Activated B cell treated with CpG ODN at 0.5 μM for 24 hours (primary cell): ENCODE measurements at regions of chr6 and their contacts with region 1.

Region 1: GRCh38 chr6:7725849-7726415 is at the start of gene BMP6:
- DNase-seq: peak; percentile 57
- ATAC-seq: peak; percentile 85
- H3K4me3 Mint-ChIP-seq: peak within 1 kb of the TSS; percentile 83
- H3K27ac Mint-ChIP-seq: no peak within 1 kb of the TSS
- H3K4me1 Mint-ChIP-seq: peaks cover 30% of the 10 kb centered on the region
- H3K27me3 Mint-ChIP-seq: peaks cover 53% of the 10 kb centered on the region
- CTCF ChIP-seq: no peak
- total RNA-seq, gene BMP6: 0.75 and 0.78 TPM in 2 replicates

Region 2: GRCh38 chr6:6676910-6677441 is 1049.0 kb before region 1 on chr6:
- CTCF ChIA-PET with region 1: no interaction called
- POLR2A ChIA-PET with region 1: no interaction called
- intact Hi-C with region 1: loop called (anchors 2 kb)
- DNase-seq: peak; percentile 65
- ATAC-seq: peak; percentile 94
- H3K4me3 Mint-ChIP-seq: no peak overlapping the region
- H3K27ac Mint-ChIP-seq: no peak overlapping the region
- H3K4me1 Mint-ChIP-seq: peaks cover 8% of the 10 kb centered on the region
- H3K27me3 Mint-ChIP-seq: peaks cover 6% of the 10 kb centered on the region
- CTCF ChIP-seq: peak; percentile 95

Region 3: GRCh38 chr6:7910654-7911344 is 184.9 kb after region 1 on chr6 and contains the start of gene TXNDC5:
- CTCF ChIA-PET with region 1: no interaction called
- POLR2A ChIA-PET with region 1: no interaction called
- intact Hi-C with region 1: loop called (anchors 5 kb)
- DNase-seq: peak; percentile 78
- ATAC-seq: peak; percentile 79
- H3K4me3 Mint-ChIP-seq: peak within 1 kb of the TSS; percentile 85
- H3K27ac Mint-ChIP-seq: peak within 1 kb of the TSS; percentile 83
- H3K4me1 Mint-ChIP-seq: peaks cover 26% of the 10 kb centered on the region
- H3K27me3 Mint-ChIP-seq: no peaks in the 10 kb centered on the region
- CTCF ChIP-seq: no peak
- total RNA-seq, gene TXNDC5: 68.2 TPM in 2 replicates

Region 4: DNA sequence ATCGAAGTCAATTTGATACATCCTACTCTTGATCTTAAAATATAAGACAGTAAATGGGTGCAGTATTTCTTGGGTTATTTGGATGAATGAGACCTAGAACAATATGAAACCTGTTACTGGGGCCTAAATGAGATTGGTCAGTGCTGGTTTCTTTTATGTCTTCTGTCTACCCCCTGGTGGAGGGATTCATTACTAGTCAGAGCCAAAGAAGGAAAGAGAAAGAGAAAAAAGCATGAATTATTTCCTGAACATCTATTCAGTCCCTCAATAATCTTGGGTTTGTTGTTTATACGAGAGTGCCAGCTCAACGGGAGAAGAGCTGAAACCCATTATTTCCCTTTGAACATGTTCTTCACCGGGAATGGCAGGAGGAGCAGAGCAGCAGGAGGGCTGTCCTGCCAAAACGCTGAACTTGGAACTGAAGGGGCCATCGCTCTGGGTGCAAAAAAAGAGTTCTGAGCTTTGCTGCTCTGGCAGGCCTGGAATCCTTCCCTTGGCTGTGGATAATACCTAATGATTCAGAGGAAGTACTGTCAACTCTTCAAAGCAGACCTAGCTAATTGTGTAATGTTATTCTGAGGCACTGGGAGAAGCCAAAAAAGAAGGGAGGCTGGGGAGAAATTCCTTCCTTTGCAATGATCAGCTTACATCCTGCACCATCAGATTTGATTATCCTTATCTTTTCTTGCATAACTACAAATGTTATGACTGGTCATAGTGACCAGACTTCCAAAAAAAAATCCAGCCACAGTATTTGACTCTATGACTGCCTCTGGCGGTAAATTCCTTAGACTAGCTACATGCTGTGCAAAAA is 266.3 kb after region 1 on chr6:
- CTCF ChIA-PET with region 1: interaction called, 26 read pairs
- POLR2A ChIA-PET with region 1: no interaction called
- intact Hi-C with region 1: loop called (anchors 1 kb)
- DNase-seq: no peak
- ATAC-seq: peak; percentile 45
- H3K4me3 Mint-ChIP-seq: no peak overlapping the region
- H3K27ac Mint-ChIP-seq: no peak overlapping the region
- H3K4me1 Mint-ChIP-seq: peaks cover 8% of the 10 kb centered on the region
- H3K27me3 Mint-ChIP-seq: no peaks in the 10 kb centered on the region
- CTCF ChIP-seq: no peak

Region 5: DNA sequence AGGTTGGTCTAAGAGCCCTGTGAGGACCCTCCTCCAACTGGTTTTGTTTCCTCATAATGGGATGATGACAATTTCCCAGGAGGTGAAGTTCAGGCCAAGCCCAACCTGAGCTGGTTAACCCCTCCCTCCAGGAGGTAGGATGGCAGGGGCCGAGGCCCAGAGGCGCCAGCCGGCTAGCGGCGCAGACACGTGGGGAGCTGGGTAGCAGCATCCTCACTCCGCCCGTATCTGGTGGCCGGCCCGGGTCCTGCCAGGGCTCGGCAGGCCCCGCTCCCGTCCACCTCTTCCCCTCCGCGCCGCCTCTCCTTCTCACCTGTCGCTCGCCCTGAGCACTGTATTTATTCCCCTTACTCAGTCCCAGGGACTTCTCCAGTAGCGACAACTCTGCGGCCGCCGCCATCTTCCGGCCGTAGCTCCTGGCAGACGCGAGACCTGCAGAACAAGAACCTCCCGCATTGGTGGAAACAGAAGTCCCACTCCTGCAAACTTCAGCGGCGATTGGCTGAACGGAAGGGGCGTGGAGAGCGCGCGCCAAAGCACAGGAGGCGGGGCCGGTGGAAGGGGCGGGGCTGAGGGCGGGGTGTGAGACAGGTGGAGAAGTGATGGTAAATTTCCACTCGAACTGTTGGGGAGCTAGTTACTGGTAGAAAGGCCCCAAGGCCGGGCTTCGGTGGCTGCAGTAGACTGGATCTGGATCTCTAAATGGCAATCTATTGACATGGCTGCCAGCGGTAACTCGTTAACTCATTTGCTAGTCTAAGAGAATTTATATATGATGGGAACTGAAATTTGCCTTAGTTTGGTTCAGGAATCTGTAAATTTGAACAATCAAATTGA is 376.4 kb after region 1 on chr6 and contains the start of gene EEF1E1:
- CTCF ChIA-PET with region 1: no interaction called
- POLR2A ChIA-PET with region 1: interaction called, 3 read pairs
- intact Hi-C with region 1: loop called (anchors 2 kb)
- DNase-seq: peak; percentile 80
- ATAC-seq: peak; percentile 98
- H3K4me3 Mint-ChIP-seq: peak within 1 kb of the TSS; percentile 97
- H3K27ac Mint-ChIP-seq: peak within 1 kb of the TSS; percentile 93
- H3K4me1 Mint-ChIP-seq: peaks cover 25% of the 10 kb centered on the region
- H3K27me3 Mint-ChIP-seq: peaks cover 14% of the 10 kb centered on the region
- CTCF ChIP-seq: no peak
- total RNA-seq, gene EEF1E1: 32.5 and 33.0 TPM in 2 replicates